Mammary epithelial cell (primary cell): ENCODE measurements at regions of chr1 and their contacts with region 1.

Region 1: GRCh38 chr1:214584805-214585766 is 17.9 kb upstream of the CENPF start:
- DNase-seq: peak; percentile 64
- H3K4me3 ChIP-seq: no peak overlapping the region
- H3K27ac ChIP-seq: peak overlapping the region; percentile 54
- H3K4me1 ChIP-seq: peaks cover 39% of the 10 kb centered on the region
- H3K27me3 ChIP-seq: no peaks in the 10 kb centered on the region
- CTCF ChIP-seq: peak; percentile 79 to 98

Region 2: DNA sequence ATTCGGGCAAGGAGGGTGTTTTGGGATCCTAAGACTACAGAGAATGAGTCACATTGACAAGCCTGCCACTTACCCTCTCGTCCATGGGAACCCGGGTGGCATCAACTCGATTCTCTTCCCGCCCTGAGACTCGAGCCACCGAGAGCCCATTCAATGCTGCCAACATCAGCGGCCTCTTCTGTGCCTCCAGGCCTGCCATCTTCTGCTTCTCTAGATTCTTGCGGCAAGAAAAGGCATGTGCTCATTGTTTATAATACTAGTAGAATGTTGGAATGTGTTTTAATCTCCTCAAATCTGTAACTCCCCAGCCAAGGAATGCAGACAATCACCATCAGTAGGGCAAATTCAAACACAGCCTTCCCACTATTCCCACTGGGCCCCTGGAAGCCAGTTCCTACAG is 207.2 kb before region 1 on chr1:
- CTCF ChIA-PET with region 1: no interaction called
- dilution Hi-C with region 1: no loop called
- in situ Hi-C with region 1: loop called (anchors 10 to 25 kb)
- intact Hi-C with region 1: loop called (anchors 5 kb)
- DNase-seq: peak; percentile 26
- H3K4me3 ChIP-seq: no peak overlapping the region
- H3K27ac ChIP-seq: peak overlapping the region; percentile 47
- H3K4me1 ChIP-seq: peaks cover 40% of the 10 kb centered on the region
- H3K27me3 ChIP-seq: no peaks in the 10 kb centered on the region
- CTCF ChIP-seq: no peak

Region 3: DNA sequence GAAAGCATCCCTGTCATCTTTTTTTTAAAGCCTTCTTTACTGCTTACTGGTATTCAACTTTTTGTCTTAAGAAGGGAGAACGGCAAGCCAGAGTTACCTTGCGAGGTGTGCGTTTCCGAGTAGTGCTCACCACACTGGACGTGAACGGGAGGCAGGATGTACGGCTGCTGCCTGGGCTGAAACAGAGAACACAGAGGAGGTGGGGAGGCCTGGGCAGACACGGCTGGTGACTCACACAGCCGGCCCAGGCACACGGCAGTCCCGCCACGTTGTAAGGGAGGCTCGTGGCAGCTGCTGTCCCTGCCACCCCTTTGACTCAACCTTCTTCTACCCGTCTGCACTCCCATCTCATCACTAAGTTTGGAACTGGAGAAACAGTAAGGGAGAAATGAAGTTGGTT is 198.3 kb before region 1 on chr1:
- CTCF ChIA-PET with region 1: no interaction called
- dilution Hi-C with region 1: no loop called
- in situ Hi-C with region 1: loop called in 1 of 2 experiments (anchors 25 kb)
- intact Hi-C with region 1: no loop called
- DNase-seq: peak; percentile 75
- H3K4me3 ChIP-seq: no peak overlapping the region
- H3K27ac ChIP-seq: no peak overlapping the region
- H3K4me1 ChIP-seq: peaks cover 6% of the 10 kb centered on the region
- H3K27me3 ChIP-seq: no peaks in the 10 kb centered on the region
- CTCF ChIP-seq: no peak

Region 4: DNA sequence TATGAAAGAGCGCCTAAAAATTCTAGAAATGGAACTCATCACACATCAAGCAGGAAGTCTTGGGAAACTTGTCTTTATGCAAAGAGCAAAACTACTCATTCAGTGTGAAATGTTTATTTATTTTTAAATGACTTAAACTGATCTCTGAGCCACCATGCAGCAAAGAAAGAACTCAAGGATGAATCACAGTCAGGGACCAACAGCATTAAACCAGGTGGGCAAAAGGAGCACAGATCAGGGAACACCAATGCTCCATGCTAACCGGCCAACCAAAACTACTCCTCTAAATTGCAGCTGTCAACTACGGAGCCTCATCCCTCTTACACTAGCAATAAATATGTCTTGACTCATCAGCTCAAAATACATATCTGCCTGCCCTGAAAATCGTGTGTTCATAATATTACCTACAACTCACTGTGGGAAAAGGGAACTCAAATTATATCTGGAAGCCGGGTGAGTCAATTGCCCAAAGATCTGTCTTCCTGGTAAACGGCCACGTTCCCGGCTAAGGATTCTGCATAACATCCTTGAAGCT is 162.9 kb before region 1 on chr1:
- CTCF ChIA-PET with region 1: no interaction called
- dilution Hi-C with region 1: loop called (anchors 5 kb)
- in situ Hi-C with region 1: no loop called
- intact Hi-C with region 1: no loop called
- DNase-seq: peak; percentile 88
- H3K4me3 ChIP-seq: peak overlapping the region in 1 of 3 experiments; percentile 14
- H3K27ac ChIP-seq: peak overlapping the region; percentile 92
- H3K4me1 ChIP-seq: peaks cover 86% of the 10 kb centered on the region
- H3K27me3 ChIP-seq: no peaks in the 10 kb centered on the region
- CTCF ChIP-seq: no peak

Region 5: DNA sequence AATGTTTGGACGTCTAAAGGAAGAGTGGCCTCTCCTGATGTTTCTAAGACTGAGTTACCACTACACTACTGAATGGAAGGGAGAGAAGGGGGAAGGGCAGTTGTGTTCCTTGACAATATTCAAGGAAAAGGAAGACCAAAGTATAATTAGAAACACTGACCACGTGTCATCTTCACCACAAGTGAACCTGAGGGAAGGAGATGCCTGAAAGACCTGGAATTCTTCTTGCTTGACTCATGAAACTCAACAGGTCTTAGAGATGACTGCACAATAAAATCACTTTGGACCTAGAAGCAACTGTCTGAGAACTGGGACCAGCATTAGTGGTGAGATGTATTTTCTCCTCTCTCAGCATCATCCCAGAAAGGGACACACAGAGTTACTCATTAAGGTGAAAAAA is 90.4 kb before region 1 on chr1:
- CTCF ChIA-PET with region 1: no interaction called
- dilution Hi-C with region 1: no loop called
- in situ Hi-C with region 1: loop called in 1 of 2 experiments (anchors 10 kb)
- intact Hi-C with region 1: no loop called
- DNase-seq: peak; percentile 78
- H3K4me3 ChIP-seq: no peak overlapping the region
- H3K27ac ChIP-seq: peak overlapping the region; percentile 78
- H3K4me1 ChIP-seq: peaks cover 30% of the 10 kb centered on the region
- H3K27me3 ChIP-seq: no peaks in the 10 kb centered on the region
- CTCF ChIP-seq: no peak

Region 6: DNA sequence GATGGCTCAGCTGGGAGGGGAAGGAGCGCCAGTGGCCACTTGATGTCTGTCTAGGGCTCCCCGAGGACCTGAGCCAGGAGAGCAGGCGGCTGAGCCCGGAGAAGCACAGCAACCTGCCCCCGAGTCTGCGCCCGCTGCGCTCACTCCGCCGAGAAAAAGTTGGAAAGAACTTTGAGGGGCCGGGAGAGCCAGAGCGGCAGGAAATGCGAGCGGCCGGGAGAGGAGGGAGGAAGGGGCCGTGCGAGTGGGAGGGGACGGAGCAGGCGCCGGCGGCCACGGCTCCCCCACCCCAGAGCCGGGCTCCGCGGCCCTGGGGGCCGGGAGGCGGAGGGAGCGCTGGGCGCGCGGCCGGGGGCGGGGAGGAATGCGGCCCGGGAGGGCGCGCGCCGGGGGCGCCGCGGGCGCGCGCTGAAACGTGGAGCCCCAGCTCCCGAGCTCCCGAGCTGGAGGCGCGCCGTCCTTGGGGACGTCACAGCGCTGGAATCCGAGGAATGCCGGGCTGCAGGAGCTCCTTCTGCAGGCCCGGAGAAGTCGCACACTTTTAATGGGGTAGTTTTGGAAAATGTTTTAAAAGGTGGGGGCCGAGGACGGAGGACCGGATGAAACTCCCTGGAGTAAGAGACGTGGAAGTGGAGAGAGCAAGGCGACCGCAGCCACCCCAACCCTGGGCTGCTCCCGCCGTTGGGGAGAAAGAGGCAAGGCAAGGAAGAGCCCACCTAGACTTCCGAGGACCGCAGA is 33.5 kb before region 1 on chr1 and contains the start of gene PTPN14:
- CTCF ChIA-PET with region 1: no interaction called
- dilution Hi-C with region 1: loop called (anchors 5 kb)
- in situ Hi-C with region 1: loop called in 1 of 2 experiments (anchors 5 kb)
- intact Hi-C with region 1: loop called (anchors 1 kb)
- DNase-seq: peak; percentile 92
- H3K4me3 ChIP-seq: peak within 1 kb of the TSS; percentile 76 to 96 (median 90)
- H3K27ac ChIP-seq: peak within 1 kb of the TSS; percentile 99
- H3K4me1 ChIP-seq: peaks cover 35% of the 10 kb centered on the region
- H3K27me3 ChIP-seq: no peaks in the 10 kb centered on the region
- CTCF ChIP-seq: peak; percentile 22 to 55
- total RNA-seq, gene PTPN14: 152 to 157 TPM

Region 7: GRCh38 chr1:214565310-214565709 is 19.8 kb before region 1 on chr1:
- CTCF ChIA-PET with region 1: interaction called, 10 read pairs
- dilution Hi-C with region 1: no loop called
- in situ Hi-C with region 1: no loop called
- intact Hi-C with region 1: no loop called
- DNase-seq: no peak
- H3K4me3 ChIP-seq: no peak overlapping the region
- H3K27ac ChIP-seq: no peak overlapping the region
- H3K4me1 ChIP-seq: peaks cover 41% of the 10 kb centered on the region
- H3K27me3 ChIP-seq: no peaks in the 10 kb centered on the region
- CTCF ChIP-seq: no peak

Region 8: DNA sequence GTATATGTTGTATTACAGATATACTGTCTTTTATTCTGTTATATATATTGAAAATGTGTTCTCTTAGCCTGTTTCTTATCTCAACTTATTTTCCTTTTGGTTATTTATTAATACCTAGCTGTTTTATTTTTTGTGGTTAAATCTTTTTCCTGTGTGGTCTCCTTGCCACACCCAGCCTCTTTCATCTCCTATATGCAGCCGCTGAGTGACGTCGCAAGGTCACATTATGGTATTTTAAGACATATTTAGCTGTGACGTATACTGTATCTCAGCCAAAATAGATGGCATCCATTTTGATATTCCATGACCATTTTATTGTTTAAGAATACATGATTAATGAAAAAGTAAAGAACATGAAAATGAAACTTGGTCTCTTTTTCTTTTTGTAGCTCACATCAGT is 47.0 kb after region 1 on chr1:
- CTCF ChIA-PET with region 1: no interaction called
- dilution Hi-C with region 1: no loop called
- in situ Hi-C with region 1: no loop called
- intact Hi-C with region 1: no loop called
- DNase-seq: no peak
- H3K4me3 ChIP-seq: no peak overlapping the region
- H3K27ac ChIP-seq: no peak overlapping the region
- H3K4me1 ChIP-seq: no peaks in the 10 kb centered on the region
- H3K27me3 ChIP-seq: no peaks in the 10 kb centered on the region
- CTCF ChIP-seq: no peak